ENCODE measurements at regions of chr17 and their contacts with region 1.

Region 1: DNA sequence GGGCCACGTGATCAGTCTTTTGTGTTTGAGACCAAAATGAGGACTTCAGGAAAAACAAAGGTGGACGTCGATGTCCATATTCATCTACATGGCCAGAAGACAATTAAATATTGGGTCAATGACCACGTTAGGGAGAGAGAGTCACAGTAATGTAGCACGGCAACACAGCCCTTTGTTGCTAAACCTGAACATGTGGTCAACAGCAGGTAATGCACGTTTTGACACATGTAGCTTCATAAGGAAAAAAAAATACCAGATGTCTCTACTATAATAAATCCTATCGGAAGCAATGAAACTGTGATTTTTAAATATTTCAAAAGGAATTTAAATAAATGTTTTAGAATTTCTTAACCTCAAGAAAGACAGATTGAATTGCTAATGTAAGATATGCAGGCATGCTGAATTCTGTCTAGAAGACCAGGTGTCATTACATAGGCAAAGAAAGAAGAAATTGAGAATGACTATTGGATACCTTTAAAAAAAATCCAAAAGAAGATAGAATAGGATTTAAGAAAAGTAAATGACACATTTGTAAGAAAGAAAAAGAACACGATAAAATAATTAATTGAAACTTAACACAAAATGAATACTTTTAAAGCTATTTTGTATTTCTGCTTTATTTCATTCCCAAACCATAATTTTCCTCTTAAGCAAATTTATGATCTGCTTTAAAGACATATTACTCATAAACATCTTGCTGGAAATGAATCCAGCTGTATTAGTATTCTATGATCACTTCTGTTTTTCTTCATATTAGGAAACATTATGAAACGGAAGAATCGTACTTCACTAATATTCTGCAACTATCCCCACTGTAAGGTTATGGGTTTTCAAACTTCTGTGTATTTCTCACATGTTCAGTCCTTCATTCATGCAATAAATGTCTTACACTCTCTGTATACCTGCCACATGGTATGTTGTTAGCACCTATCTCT is 30.1 kb downstream of the ABCA8 start:
- DNase-seq: no peak
- H3K4me3 ChIP-seq: no peak overlapping the region
- H3K27ac ChIP-seq: no peak overlapping the region
- H3K4me1 ChIP-seq: no peaks in the 10 kb centered on the region
- H3K27me3 ChIP-seq: no peaks in the 10 kb centered on the region
- CTCF ChIP-seq: no peak

Region 2: DNA sequence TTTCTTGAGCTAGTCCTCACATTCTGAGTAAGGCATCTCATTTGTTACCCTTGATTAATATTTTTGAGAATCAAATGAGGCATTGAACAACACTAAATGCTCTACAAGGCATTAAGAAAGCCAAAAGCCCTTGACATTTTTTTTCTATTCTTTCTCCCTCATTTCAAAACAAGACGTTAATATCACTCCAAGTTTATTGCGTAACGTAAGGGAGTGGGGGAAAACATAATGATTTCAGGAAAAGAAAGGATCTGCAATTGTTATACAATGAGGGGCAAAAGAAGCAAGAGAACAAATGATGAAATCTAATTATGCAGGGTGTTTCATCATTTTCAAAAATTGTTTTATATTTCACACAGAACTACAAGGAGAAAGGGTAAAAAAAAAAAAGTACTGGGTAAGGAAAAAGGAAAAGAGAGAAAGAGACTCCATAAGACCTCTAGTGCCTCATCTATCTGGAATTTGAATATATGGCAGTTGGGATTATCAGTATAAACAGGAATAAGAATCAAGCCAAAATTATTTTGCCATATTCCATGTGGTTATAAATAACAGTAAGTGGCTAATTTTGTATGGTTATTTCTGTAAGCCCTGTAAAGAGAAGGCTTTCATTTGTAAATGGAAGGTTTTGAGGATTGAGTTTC is 132.9 kb before region 1 on chr17:
- CTCF ChIA-PET with region 1: no interaction called
- POLR2A ChIA-PET with region 1: interaction called, 13 read pairs
- intact Hi-C with region 1: no loop called
- DNase-seq: no peak
- H3K4me3 ChIP-seq: no peak overlapping the region
- H3K27ac ChIP-seq: no peak overlapping the region
- H3K4me1 ChIP-seq: peaks cover 27% of the 10 kb centered on the region
- H3K27me3 ChIP-seq: no peaks in the 10 kb centered on the region
- CTCF ChIP-seq: no peak

Region 3: GRCh38 chr17:68903286-68903685 is 21.8 kb before region 1 on chr17:
- CTCF ChIA-PET with region 1: no interaction called
- POLR2A ChIA-PET with region 1: interaction called, 11 read pairs
- intact Hi-C with region 1: no loop called
- DNase-seq: no peak
- H3K4me3 ChIP-seq: no peak overlapping the region
- H3K27ac ChIP-seq: no peak overlapping the region
- H3K4me1 ChIP-seq: no peaks in the 10 kb centered on the region
- H3K27me3 ChIP-seq: no peaks in the 10 kb centered on the region
- CTCF ChIP-seq: no peak